ENCODE measurements at regions of chr15 and their contacts with region 1.

Region 1: DNA sequence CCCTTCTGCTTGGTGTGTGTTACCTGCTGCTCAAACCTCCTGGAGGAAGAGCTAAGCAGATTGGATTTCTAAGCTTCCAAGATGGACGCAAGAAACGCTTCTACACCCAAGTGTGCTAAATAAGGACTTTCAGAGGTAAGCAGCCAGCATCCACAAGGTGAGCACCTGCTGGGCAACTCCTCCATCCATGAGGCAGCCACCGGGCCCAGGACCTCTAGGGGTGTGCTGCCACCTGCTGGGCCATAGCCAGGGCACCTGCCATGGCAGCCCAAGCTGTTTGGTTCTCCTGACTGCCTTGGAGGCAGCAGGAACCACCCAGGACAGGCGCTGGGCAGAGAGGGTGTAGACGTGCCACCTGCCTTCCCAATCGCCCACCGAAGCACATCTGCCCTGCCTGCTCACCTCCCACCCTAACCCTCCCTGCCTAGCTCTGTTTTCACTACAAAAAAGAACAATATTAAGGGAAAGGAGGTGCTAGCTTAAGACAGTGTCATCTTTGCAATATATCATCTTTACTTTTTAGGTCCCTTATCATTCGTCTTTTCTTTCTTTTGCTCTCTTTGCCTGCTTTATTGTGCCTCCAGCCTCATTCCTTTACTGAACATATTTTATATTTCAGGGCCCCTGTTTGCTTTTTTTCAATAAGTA is 12.9 kb downstream of the C15orf62 start:
- DNase-seq: peak; percentile 81
- CTCF ChIP-seq: peak; percentile 95

Region 2: DNA sequence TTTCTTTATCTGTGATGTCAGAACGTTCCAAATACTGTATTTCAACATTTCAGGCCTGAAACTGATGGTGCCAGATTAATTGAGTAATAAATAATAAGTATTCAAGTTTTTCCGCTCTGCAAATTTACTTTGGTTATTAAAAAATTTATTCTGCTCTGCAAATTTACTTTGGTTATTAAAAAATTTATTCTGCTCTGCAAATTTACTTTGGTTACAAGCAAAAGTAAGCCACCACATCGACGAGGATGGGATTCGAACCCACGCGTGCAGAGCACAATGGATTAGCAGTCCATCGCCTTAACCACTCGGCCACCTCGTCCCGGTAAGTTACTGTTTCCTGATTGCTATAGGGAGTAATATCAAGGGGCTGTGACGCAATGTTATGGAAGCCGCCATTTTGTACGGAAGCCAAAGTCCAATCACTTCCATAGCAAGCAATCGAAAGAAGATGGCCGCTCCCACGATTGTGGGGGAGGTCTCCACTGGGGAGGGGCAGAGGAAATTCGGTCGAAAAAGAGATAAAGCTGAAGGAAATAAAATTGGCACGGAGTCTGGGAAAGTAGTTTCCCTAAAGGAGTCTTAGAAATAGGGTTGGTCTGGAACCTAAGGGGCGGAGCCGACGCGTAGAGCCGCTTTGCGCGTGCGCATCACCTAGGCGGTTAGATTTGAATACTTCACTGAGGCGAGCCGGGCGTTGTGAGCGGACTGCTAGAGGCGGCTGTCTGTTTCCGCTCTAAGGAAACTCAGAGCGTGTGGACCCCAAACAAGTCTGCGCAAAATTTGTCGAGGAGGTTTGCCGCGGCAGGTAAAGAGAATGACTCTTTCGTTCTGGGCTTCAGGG is 188.9 kb before region 1 on chr15 and contains the start of gene KNL1:
- CTCF ChIA-PET with region 1: interaction called, 35 read pairs
- POLR2A ChIA-PET with region 1: no interaction called
- DNase-seq: peak; percentile 87
- CTCF ChIP-seq: no peak

Region 3: GRCh38 chr15:40694688-40695468 is 87.8 kb before region 1 on chr15 and contains the start of gene RAD51:
- CTCF ChIA-PET with region 1: interaction called, 12 read pairs
- POLR2A ChIA-PET with region 1: no interaction called
- DNase-seq: peak; percentile 95
- CTCF ChIP-seq: no peak

Region 4: DNA sequence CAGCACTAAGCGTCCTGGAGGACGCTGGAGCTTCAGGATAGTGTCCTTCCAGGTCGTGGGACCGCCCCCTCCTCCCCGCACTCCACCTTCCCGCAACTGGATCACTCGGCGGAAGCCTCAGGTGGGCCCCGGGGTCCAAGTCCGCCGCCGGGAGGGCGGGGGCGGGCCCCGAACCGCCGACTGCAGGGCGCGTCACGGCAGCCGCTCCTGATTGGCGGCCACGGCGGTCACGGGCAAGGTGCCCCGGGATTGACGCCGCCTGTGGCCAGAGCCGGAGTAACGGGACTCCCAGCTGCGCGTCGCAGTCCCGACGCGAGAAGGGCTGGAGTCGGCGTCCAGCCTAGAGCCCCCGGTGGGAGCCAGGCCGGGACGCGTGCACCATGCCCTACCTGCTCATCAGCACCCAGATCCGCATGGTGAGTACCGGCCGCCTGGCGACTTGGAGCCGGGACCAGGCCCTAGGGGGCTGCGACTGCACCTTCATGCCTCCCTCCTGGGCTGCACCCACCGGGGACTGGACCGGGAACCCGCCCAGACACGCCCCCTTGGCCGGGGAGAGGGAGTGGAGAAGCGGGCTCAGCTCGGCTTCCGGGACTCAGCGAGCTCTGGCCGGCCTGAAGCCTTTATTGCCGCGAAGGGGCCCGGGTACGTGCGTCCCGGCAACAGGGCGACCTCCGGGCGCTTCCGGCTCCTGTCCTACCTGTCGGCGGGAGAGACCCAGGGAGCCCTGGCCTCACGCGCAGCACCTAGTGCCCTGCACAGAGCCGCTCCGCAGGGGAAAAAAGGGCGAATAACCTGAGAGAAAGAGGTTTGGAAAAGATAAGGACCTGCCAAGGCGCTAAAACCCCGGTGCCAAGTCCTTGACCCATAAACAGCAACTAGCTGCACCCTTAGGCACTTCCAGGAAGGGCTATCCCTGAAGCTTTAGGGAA is 18.6 kb before region 1 on chr15 and contains the start of gene GCHFR:
- CTCF ChIA-PET with region 1: interaction called, 45 read pairs
- POLR2A ChIA-PET with region 1: no interaction called
- DNase-seq: peak; percentile 89
- CTCF ChIP-seq: peak; percentile 37

Region 5: DNA sequence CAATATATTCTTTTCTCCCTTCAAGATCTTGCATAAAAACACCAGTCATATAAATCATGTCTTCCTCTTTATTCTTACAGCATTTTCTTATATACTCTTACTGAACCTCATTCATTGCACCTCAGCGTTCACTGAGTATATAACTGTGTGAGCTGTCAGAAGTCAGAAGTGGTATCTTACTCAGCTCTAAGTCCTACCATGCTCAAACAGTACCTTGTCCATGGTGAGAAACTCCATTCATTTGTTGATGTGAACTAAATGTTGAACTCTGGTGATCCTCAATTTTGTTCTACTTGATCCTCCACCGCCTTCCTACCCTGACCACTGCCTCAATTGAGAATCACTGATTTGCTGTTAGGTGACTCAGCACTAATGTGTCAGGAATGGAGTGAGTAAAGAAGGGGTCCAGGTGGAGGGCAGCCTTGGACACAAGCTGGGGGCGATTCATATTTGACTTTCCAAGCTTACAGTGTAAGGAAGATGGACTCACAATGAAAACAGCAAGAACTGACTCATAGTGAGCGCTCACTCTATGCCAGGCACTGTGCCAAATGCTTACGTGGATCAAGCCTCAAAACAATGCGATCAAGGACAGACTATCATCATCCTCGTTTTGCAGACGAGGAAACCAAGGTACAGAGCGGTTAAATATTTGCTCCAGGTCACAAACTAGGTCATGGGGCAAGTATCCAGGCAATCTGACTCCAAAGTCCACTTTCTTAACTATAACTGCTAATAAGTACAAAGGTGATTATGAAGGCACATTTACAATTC is 10.7 kb after region 1 on chr15:
- CTCF ChIA-PET with region 1: interaction called, 26 read pairs
- POLR2A ChIA-PET with region 1: no interaction called
- DNase-seq: no peak
- CTCF ChIP-seq: no peak

Region 6: GRCh38 chr15:40928821-40929659 is 146.3 kb after region 1 on chr15 and contains the start of gene DLL4:
- CTCF ChIA-PET with region 1: no interaction called
- POLR2A ChIA-PET with region 1: no interaction called
- DNase-seq: peak; percentile 63
- CTCF ChIP-seq: no peak